IMR-90 (cell line): ENCODE measurements at regions of chrX and their contacts with region 1.

Region 1: DNA sequence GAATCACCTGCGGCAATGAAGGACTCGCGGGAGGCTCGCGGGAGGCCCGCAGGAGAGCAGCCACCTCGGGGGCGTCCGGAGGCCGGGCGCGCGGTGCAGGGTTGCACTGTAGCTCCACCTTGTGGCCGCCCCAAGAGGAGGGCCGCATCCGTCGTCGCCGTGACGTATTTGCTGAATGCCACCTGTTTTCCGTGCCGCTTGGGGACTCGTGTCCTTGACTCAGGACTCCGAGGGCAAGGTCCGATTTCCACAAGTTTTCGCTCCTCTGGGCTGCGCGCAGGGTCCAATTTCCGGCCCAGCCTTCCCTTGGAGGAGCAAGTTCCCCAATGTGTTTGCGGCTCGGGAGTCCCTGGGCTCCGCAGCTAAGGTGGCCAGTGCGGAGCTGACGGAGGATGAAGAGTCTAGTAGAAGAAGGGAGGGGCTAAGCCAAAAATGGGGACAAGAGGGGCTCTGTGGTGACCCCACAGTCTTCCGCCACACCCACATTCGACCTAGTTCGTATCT is 10.7 kb upstream of the DLG3 start:
- DNase-seq: peak; percentile 31
- ATAC-seq: peak; percentile 73
- H3K4me3 ChIP-seq: peak overlapping the region; percentile 91
- H3K27ac ChIP-seq: peak overlapping the region; percentile 33; the same call in 1 of the 2 replicates
- H3K4me1 ChIP-seq: peaks cover 4% of the 10 kb centered on the region; the same call in 1 of the 2 replicates
- H3K27me3 ChIP-seq: no peaks in the 10 kb centered on the region; the same call in 1 of the 2 replicates
- CTCF ChIP-seq: peak; percentile 70
- POLR2A ChIP-seq: no peak
- RAD21 ChIP-seq: peak; percentile 60

Region 2: GRCh38 chrX:70133303-70134115 is 300.4 kb before region 1 on chrX and contains the start of gene IGBP1:
- CTCF ChIA-PET with region 1: no interaction called
- POLR2A ChIA-PET with region 1: no interaction called
- dilution Hi-C with region 1: no loop called
- in situ Hi-C with region 1: no loop called
- intact Hi-C with region 1: loop called (anchors 1 kb)
- DNase-seq: peak; percentile 83
- ATAC-seq: peak; percentile 88
- H3K4me3 ChIP-seq: peak within 1 kb of the TSS; percentile 83
- H3K27ac ChIP-seq: peak within 1 kb of the TSS; percentile 92
- H3K4me1 ChIP-seq: no peaks in the 10 kb centered on the region
- H3K27me3 ChIP-seq: no peaks in the 10 kb centered on the region
- CTCF ChIP-seq: peak; percentile 65
- POLR2A ChIP-seq: peak; percentile 75
- RAD21 ChIP-seq: peak; percentile 18; the same call in 1 of the 2 replicates
- total RNA-seq, gene IGBP1: 75.3 and 87.1 TPM in 2 replicates

Region 3: DNA sequence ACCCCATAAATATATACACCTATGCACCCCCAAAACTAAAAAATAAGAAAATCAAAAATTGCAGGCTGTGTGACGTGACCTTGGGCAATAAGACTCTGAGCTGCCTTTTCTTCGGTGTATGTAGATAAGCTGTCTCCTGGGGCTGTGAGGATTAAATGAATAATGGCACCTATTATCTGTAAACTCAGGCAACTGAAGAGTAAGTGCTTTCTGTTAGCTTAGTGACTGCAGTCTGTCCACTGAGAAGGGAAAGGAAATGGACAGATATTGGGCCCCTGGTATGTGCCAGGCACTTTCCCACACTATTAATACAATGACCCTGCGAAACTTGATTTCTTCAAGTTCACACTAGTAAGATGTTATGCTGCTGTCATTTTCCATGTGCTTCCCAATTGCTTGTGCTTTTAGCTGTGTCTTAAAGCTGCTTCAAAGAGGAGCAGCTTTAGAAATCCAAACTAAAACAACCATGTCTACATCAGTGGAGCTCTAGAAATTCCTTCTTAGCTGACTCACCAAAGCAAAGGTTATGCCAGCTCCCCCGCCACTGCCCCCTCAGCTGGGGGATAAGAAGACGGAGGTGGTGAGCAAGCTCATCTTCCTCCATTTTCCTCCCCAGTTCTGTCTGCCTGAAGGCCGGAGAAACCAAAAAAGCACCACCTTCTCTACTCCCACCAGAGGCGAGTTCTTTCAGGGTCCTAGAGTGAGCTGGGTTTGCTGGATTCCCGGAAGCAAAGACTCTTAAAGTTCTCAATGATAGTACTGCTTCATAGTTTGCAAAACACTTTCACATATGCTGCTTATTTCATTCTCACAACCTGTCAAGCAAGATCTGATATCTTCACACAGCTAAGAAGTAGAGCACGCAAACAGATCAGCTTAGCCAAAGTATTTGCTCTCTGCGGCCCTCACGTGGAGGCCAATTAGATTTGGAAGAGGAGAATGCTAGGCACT is 265.4 kb before region 1 on chrX:
- CTCF ChIA-PET with region 1: no interaction called
- POLR2A ChIA-PET with region 1: no interaction called
- dilution Hi-C with region 1: no loop called
- in situ Hi-C with region 1: no loop called
- intact Hi-C with region 1: loop called (anchors 1 kb)
- DNase-seq: peak; percentile 77
- ATAC-seq: peak; percentile 70
- H3K4me3 ChIP-seq: no peak overlapping the region
- H3K27ac ChIP-seq: peak overlapping the region; percentile 83
- H3K4me1 ChIP-seq: peaks cover 13% of the 10 kb centered on the region
- H3K27me3 ChIP-seq: no peaks in the 10 kb centered on the region; the same call in 1 of the 2 replicates
- CTCF ChIP-seq: no peak
- POLR2A ChIP-seq: no peak
- RAD21 ChIP-seq: 0 out of 2 replicates have a peak, but pooled peaks have one; percentile 4

Region 4: DNA sequence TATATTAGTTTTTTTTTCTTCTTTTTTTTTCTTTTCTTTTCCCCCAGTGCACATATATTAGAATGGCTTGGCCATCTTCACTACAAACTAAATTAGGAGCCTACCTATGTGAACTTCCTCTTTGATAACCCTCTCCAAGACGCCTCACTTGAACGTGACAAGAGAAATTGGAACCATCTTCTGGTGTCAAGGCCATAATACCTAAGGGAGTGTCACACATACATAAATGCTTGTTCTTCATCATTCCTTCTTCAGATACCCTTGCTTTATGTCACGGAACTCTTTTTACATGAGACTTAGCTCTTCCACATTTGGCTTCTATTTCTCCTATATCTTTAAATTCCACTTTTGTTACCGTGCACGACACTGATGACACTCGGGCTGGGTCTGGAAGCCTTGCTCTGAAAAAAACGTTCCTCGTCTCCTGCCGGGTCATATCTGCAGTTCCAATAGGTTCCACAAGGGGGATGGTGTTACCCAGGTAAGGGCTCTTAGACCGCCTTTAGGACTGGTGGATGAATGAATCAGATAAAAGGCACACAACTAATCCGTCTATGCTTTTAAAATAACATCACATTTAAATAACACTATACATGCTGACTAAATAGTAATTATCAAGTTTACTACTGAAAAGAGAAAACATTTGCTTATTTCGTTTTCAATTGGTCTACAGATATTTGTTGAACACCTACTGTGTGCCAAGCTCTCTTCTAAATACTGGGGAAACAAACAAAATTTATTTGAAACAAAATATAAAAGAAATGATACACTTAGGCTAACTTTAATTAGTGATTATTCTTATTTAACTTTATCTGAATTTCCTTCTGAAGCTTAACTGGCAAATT is 236.7 kb before region 1 on chrX:
- CTCF ChIA-PET with region 1: no interaction called
- POLR2A ChIA-PET with region 1: no interaction called
- dilution Hi-C with region 1: no loop called
- in situ Hi-C with region 1: no loop called
- intact Hi-C with region 1: loop called (anchors 2 kb)
- DNase-seq: peak; percentile 40
- ATAC-seq: peak; percentile 61; the same call in 1 of the 2 replicates
- H3K4me3 ChIP-seq: no peak overlapping the region
- H3K27ac ChIP-seq: no peak overlapping the region
- H3K4me1 ChIP-seq: no peaks in the 10 kb centered on the region
- H3K27me3 ChIP-seq: peaks cover 8% of the 10 kb centered on the region; the same call in 1 of the 2 replicates
- CTCF ChIP-seq: peak; percentile 55
- POLR2A ChIP-seq: no peak
- RAD21 ChIP-seq: peak; percentile 54

Region 5: DNA sequence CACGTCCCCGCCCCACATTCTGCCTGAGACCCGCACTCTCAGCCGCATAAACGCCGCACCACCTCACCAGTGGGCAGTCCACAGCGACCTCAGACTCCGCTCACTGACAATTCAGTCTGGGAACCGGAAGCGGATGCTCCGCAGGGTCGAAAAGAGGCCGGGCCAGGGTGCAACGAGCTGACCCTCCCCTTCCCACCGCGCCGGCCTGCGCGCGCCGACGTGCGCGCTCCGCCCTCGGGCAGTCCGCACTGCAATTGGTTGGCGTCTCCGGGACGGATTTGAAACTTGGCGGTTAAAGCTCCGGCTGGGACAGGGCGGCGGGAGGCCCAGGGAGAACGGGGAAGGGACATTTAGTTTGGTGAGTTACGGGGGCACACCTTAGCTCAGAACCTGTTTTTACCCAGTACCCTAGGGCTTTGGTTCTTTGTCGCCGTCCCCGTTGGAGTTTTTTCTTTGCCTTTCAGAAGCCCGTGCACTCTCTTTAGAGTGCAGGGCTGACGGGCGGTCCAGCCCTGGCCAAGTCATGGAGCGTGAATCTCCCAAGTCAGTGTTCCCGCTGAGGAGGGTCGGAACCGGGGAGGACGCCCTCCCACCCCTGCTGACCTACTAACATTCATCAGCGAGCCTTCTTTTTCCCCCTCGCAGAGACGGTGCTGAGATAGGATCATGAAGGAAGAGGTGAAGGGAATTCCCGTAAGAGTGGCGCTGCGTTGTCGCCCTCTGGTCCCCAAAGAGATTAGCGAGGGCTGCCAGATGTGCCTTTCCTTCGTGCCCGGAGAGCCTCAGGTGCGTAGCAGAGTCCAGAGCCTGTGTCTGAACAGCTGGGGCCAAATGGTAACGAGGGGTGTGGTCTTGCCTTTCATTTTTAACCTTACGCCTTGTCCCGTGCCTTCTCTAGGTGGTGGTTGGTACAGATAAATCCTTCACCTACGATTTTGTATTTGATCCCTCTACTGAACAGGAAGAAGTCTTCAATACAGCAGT is 143.8 kb before region 1 on chrX and contains the starts of genes KIF4A and PDZD11:
- CTCF ChIA-PET with region 1: no interaction called
- POLR2A ChIA-PET with region 1: no interaction called
- dilution Hi-C with region 1: no loop called
- in situ Hi-C with region 1: no loop called
- intact Hi-C with region 1: loop called (anchors 1 kb)
- DNase-seq: peak; percentile 76
- ATAC-seq: peak; percentile 99
- H3K4me3 ChIP-seq: peak within 1 kb of the TSS; percentile 56
- H3K27ac ChIP-seq: peak within 1 kb of the TSS; percentile 58
- H3K4me1 ChIP-seq: peaks cover 2% of the 10 kb centered on the region; the same call in 1 of the 2 replicates
- H3K27me3 ChIP-seq: no peaks in the 10 kb centered on the region; the same call in 1 of the 2 replicates
- CTCF ChIP-seq: no peak
- POLR2A ChIP-seq: peak; percentile 23; the same call in 1 of the 2 replicates
- RAD21 ChIP-seq: no peak
- total RNA-seq, gene KIF4A: 19.0 and 24.4 TPM in 2 replicates
- total RNA-seq, gene PDZD11: 66.4 and 84.1 TPM in 2 replicates

Region 6: GRCh38 chrX:70921709-70922352 is 487.9 kb after region 1 on chrX:
- CTCF ChIA-PET with region 1: no interaction called
- POLR2A ChIA-PET with region 1: no interaction called
- dilution Hi-C with region 1: no loop called
- in situ Hi-C with region 1: no loop called
- intact Hi-C with region 1: no loop called
- DNase-seq: no peak
- ATAC-seq: no peak
- H3K4me3 ChIP-seq: no peak overlapping the region
- H3K27ac ChIP-seq: no peak overlapping the region
- H3K4me1 ChIP-seq: no peaks in the 10 kb centered on the region
- H3K27me3 ChIP-seq: peaks cover 10% of the 10 kb centered on the region
- CTCF ChIP-seq: no peak
- POLR2A ChIP-seq: no peak
- RAD21 ChIP-seq: no peak

Region 7: DNA sequence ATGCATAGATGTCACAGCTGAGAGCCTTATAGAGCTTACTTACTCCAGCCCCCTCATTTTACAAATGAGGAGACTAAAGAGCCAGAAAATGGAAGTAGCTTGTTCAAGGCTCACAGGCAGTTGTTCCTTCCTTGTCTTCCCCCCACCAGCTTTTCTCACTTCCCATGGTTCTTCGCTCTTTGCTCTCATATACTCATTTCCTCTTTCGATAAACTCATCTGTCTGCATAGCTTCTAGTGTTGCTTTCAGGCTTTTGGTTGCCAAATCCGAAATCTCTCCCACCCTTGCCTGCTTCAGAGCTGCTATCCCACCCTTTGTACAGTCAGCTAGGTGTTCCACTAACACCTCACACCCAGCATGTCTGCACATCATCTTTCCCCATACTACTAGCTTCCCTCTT is 764.2 kb after region 1 on chrX:
- CTCF ChIA-PET with region 1: no interaction called
- POLR2A ChIA-PET with region 1: interaction called, 11 read pairs
- dilution Hi-C with region 1: no loop called
- in situ Hi-C with region 1: no loop called
- intact Hi-C with region 1: no loop called
- DNase-seq: no peak
- ATAC-seq: no peak
- H3K4me3 ChIP-seq: no peak overlapping the region
- H3K27ac ChIP-seq: no peak overlapping the region
- H3K4me1 ChIP-seq: no peaks in the 10 kb centered on the region
- H3K27me3 ChIP-seq: no peaks in the 10 kb centered on the region; the same call in 1 of the 2 replicates
- CTCF ChIP-seq: no peak
- POLR2A ChIP-seq: no peak
- RAD21 ChIP-seq: no peak